Pancreas (tissue), 10 donors: ENCODE measurements at regions of chr2 and their contacts with region 1.

Region 1: GRCh38 chr2:88159955-88160415 is 10.2 kb upstream of the THNSL2 start:
- DNase-seq: peak in 3 of 6 donors; percentile 41 to 71 (median 43)
- ATAC-seq: peak; percentile 90 to 97 (median 95)
- H3K4me3 ChIP-seq: no peak overlapping the region
- H3K27ac ChIP-seq: no peak overlapping the region
- H3K4me1 ChIP-seq: no peaks in the 10 kb centered on the region
- H3K27me3 ChIP-seq: no peaks in the 10 kb centered on the region
- CTCF ChIP-seq: peak; percentile 77 to 87 (median 82)

Region 2: GRCh38 chr2:88059979-88060906 is 99.7 kb before region 1 on chr2:
- intact Hi-C with region 1: loop called in 2 of 3 experiments (anchors 5 kb)
- DNase-seq: no peak
- ATAC-seq: peak in 3 of 4 donors; percentile 51 to 61 (median 54)
- H3K4me3 ChIP-seq: no peak overlapping the region
- H3K27ac ChIP-seq: no peak overlapping the region
- H3K4me1 ChIP-seq: no peaks in the 10 kb centered on the region
- H3K27me3 ChIP-seq: no peaks in the 10 kb centered on the region
- CTCF ChIP-seq: peak; percentile 41 to 69 (median 59)

Region 3: DNA sequence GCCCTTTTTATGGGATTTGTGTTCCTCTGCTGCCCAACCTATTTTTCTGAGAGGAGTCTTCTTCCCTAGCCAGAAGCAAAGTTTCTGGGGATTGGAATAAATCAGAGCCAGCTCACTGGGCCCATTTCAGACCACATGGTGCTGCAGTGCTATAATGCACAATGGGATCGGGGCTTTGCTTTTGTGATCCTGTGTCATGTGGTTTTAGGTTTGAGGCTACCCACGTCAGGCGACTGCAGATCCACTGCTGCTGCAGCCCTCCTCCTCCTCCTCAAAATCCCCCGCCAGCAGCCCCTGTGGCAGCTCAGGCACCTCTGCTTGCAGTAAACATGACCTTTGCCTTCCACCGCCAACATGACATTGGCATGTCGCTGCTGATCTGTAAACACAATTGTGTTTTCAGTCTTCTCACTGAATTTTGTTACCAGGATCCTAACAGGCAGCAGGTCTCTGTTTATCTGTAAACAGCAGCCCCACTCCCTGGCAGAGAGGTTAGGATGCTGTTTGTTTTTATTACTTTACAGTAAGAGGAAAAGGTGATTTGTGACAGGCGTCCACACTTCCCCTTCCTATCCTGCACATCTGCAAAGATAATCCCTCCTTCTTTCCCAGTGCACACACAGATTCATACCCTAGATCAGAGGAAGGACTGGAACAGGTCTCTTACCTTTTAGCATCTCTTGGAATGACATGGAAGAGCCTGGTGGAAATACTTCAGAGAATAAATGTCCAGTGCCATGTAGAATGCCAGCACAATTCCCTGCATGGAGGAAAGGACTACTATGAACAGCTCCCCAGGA is 161.7 kb after region 1 on chr2:
- intact Hi-C with region 1: no loop called
- DNase-seq: no peak
- ATAC-seq: no peak
- H3K4me3 ChIP-seq: no peak overlapping the region
- H3K27ac ChIP-seq: no peak overlapping the region
- H3K4me1 ChIP-seq: no peaks in the 10 kb centered on the region
- H3K27me3 ChIP-seq: no peaks in the 10 kb centered on the region
- CTCF ChIP-seq: no peak